ENCODE measurements at regions of chr14 and their contacts with region 1.

Region 1: DNA sequence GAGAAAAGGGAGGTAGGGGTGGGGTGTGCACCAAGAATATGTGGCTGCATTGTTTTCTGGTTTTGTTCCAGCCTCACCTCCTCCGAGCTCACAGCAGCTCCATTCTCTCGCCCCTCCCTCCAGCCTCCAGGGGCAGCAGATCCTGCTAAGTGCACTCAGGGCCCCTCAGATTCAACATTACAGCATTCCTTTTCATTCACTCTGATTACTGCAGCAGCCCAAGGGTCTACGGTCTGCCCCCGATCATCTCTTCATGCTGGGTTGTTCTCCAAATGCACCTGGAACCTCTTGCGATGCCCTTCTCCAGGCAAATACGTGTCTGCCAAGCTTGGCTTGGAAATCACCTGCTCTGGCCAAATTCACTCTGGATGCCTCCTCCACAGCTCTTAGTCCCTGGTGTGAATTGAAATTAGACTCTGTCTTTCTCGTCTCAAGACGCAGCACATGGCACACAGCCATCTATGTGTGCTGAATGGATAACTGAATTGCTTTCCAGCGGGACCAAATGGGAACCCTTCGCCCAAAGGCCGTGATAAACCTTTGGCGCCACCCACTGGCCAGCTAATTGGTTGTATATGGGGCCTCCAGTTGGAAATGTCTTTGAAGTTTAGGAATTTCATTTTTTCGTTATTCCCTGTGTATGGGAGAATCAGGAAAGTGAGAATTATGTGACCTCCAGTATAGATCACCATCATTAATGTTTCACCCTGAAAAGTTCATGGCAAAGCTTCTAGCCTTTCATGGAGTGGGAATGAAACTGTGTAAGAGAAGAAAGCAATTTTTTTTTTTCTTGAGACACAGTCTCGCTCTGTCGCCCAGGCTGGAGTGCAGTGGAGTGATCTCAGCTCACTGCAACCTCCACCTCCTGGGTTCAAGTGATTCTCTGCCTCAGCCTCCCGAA is 9.6 kb upstream of the HSP90AA1 start:
- DNase-seq: peak; percentile 42 to 70 (median 60)
- H3K4me3 ChIP-seq: no peak overlapping the region
- H3K4me3 Mint-ChIP-seq: no peak overlapping the region
- H3K27ac ChIP-seq: no peak overlapping the region
- H3K27ac Mint-ChIP-seq: peak overlapping the region in 1 of 7 donors; percentile 4
- H3K4me1 ChIP-seq: no peaks in the 10 kb centered on the region
- H3K4me1 Mint-ChIP-seq: peaks cover 2% of the 10 kb centered on the region
- H3K27me3 ChIP-seq: peaks cover 0 to 9% of the 10 kb centered on the region in 2 donors
- H3K27me3 Mint-ChIP-seq: peaks cover 5 to 16% (median 10%) of the 10 kb centered on the region in 3 donors
- CTCF ChIP-seq: peak; percentile 87

Region 2: GRCh38 chr14:101964297-101965144 is 131.9 kb before region 1 on chr14 and contains the start of gene DYNC1H1:
- intact Hi-C with region 1: loop called in 1 of 2 experiments (anchors 5 kb)
- DNase-seq: peak; percentile 69 to 91 (median 86)
- H3K4me3 ChIP-seq: peak within 1 kb of the TSS; percentile 65 to 95 (median 93)
- H3K4me3 Mint-ChIP-seq: peak within 1 kb of the TSS; percentile 91 to 94
- H3K27ac ChIP-seq: peak within 1 kb of the TSS; percentile 78 to 85
- H3K27ac Mint-ChIP-seq: peak within 1 kb of the TSS; percentile 88 to 94 (median 92)
- H3K4me1 ChIP-seq: peaks cover 17 to 25% of the 10 kb centered on the region in 2 donors
- H3K4me1 Mint-ChIP-seq: peaks cover 30% of the 10 kb centered on the region
- H3K27me3 ChIP-seq: no peaks in the 10 kb centered on the region
- H3K27me3 Mint-ChIP-seq: peaks cover 2 to 5% (median 3%) of the 10 kb centered on the region in 3 donors
- CTCF ChIP-seq: no peak
- polyA plus RNA-seq, gene DYNC1H1: 14.7 to 87.3 (median 23.6) TPM

Region 3: GRCh38 chr14:102046343-102047278 is 49.9 kb before region 1 on chr14:
- intact Hi-C with region 1: loop called in 1 of 2 experiments (anchors 10 kb)
- DNase-seq: no peak
- H3K4me3 ChIP-seq: no peak overlapping the region
- H3K4me3 Mint-ChIP-seq: no peak overlapping the region
- H3K27ac ChIP-seq: no peak overlapping the region
- H3K27ac Mint-ChIP-seq: peak overlapping the region in 5 of 7 donors; percentile 20 to 38 (median 30)
- H3K4me1 ChIP-seq: no peaks in the 10 kb centered on the region
- H3K4me1 Mint-ChIP-seq: no peaks in the 10 kb centered on the region
- H3K27me3 ChIP-seq: no peaks in the 10 kb centered on the region
- H3K27me3 Mint-ChIP-seq: no peaks in the 10 kb centered on the region
- CTCF ChIP-seq: peak; percentile 15

Region 4: DNA sequence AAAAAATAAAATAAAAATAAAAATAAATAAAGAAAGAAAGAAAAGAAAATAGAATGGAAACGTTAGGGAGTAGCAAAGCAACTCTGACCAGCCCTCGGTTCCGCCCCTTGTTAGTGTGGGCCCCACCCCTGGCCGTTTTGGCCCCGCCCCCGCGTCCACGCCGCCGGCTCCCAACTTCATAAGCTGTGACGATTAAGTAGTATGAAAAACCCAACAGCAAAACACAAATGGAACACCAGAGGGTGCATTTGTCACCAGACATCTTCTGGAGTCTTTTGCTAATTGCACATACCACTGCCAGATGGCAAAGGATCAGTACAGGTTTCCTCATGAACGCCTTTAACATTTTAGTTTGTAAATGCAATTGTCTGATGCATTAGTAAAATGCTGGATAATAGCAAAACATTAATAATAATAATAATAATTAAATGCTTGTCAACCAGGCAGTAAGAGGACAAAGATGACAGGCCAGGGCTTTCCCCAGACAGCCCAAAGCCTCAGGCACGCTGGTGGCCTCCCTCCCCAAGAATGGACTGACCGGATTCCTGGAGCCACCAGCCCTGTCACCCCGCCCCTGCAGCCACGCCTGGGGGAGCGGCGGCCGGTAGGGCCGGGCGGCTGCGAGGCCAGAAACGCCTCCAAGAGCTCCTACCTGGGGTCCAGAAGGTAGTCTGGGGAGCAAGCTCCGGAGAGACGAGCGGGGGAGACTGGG is 33.2 kb before region 1 on chr14:
- intact Hi-C with region 1: loop called (anchors 2 kb)
- DNase-seq: peak; percentile 67 to 71 (median 69)
- H3K4me3 ChIP-seq: no peak overlapping the region
- H3K4me3 Mint-ChIP-seq: peak overlapping the region in 1 of 2 donors; percentile 55
- H3K27ac ChIP-seq: no peak overlapping the region
- H3K27ac Mint-ChIP-seq: no peak overlapping the region
- H3K4me1 ChIP-seq: no peaks in the 10 kb centered on the region
- H3K4me1 Mint-ChIP-seq: no peaks in the 10 kb centered on the region
- H3K27me3 ChIP-seq: no peaks in the 10 kb centered on the region
- H3K27me3 Mint-ChIP-seq: peaks cover 3 to 8% (median 3%) of the 10 kb centered on the region in 3 donors
- CTCF ChIP-seq: peak; percentile 41